ENCODE measurements at regions of chr9 and their contacts with region 1.

Region 1: GRCh38 chr9:2014696-2015580 is at the start of gene SMARCA2:
- DNase-seq: peak; percentile 96 to 98 (median 97)
- ATAC-seq: peak; percentile 90
- H3K4me3 ChIP-seq: peak within 1 kb of the TSS; percentile 98
- H3K4me3 Mint-ChIP-seq: peak within 1 kb of the TSS; percentile 93 to 100 (median 98)
- H3K27ac ChIP-seq: peak within 1 kb of the TSS; percentile 92
- H3K27ac Mint-ChIP-seq: peak within 1 kb of the TSS; percentile 97 to 100 (median 99)
- H3K4me1 ChIP-seq: peaks cover 16 to 18% of the 10 kb centered on the region in 2 donors
- H3K4me1 Mint-ChIP-seq: peaks cover 21 to 60% (median 32%) of the 10 kb centered on the region in 7 donors
- H3K27me3 ChIP-seq: no peaks in the 10 kb centered on the region
- H3K27me3 Mint-ChIP-seq: peaks cover 0 to 24% (median 0%) of the 10 kb centered on the region in 5 donors
- total RNA-seq, gene SMARCA2: 233 to 294 (median 258) TPM

Region 2: GRCh38 chr9:272251-273213 is 1742.4 kb before region 1 on chr9:
- CTCF ChIA-PET with region 1: no interaction called
- POLR2A ChIA-PET with region 1: no interaction called
- intact Hi-C with region 1: loop called in 1 of 2 experiments (anchors 5 kb)
- DNase-seq: peak; percentile 20 to 91 (median 85)
- ATAC-seq: peak; percentile 93
- H3K4me3 ChIP-seq: peak overlapping the region; percentile 56
- H3K4me3 Mint-ChIP-seq: peak overlapping the region in 9 of 10 donors; percentile 86 to 99 (median 92)
- H3K27ac ChIP-seq: peak overlapping the region; percentile 88
- H3K27ac Mint-ChIP-seq: peak overlapping the region in 7 of 9 donors; percentile 83 to 99 (median 94)
- H3K4me1 ChIP-seq: peaks cover 33 to 36% of the 10 kb centered on the region in 2 donors
- H3K4me1 Mint-ChIP-seq: peaks cover 30 to 66% (median 55%) of the 10 kb centered on the region in 7 donors
- H3K27me3 ChIP-seq: no peaks in the 10 kb centered on the region
- H3K27me3 Mint-ChIP-seq: no peaks in the 10 kb centered on the region

Region 3: GRCh38 chr9:1939926-1940368 is 75.0 kb before region 1 on chr9:
- CTCF ChIA-PET with region 1: no interaction called
- POLR2A ChIA-PET with region 1: interaction called, 3 read pairs
- intact Hi-C with region 1: loop called in 1 of 2 experiments (anchors 5 kb)
- DNase-seq: peak in 6 of 9 donors; percentile 19 to 44 (median 26)
- ATAC-seq: peak; percentile 70
- H3K4me3 ChIP-seq: no peak overlapping the region
- H3K4me3 Mint-ChIP-seq: no peak overlapping the region
- H3K27ac ChIP-seq: no peak overlapping the region
- H3K27ac Mint-ChIP-seq: no peak overlapping the region
- H3K4me1 ChIP-seq: no peaks in the 10 kb centered on the region
- H3K4me1 Mint-ChIP-seq: peaks cover 0 to 5% (median 0%) of the 10 kb centered on the region in 7 donors
- H3K27me3 ChIP-seq: no peaks in the 10 kb centered on the region
- H3K27me3 Mint-ChIP-seq: peaks cover 0 to 11% (median 6%) of the 10 kb centered on the region in 5 donors

Region 4: DNA sequence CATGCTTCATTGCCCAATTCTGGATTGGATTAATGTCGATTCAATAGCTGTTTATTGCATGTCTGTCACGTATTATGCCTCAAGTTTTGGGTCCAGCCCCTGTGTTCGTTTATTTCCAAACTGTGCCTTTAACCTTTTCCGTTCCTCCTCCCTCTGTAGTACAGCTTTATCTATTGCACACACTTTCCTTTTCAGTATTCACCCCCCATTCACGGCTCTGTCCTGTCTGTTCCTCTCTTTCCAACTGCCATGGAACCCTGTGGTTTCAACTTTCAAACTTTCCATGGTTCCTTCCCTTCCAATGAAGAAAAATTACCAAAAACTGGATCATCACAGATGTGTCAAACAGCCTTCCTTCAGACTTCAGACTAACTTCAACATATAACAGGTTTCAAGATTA is 17.3 kb after region 1 on chr9:
- CTCF ChIA-PET with region 1: interaction called, 3 read pairs
- POLR2A ChIA-PET with region 1: interaction called, 35 read pairs
- intact Hi-C with region 1: loop called in 1 of 2 experiments (anchors 2 kb)
- DNase-seq: no peak
- ATAC-seq: no peak
- H3K4me3 ChIP-seq: no peak overlapping the region
- H3K4me3 Mint-ChIP-seq: peak overlapping the region in 1 of 10 donors; percentile 56
- H3K27ac ChIP-seq: no peak overlapping the region
- H3K27ac Mint-ChIP-seq: peak overlapping the region in 8 of 9 donors; percentile 16 to 84 (median 56)
- H3K4me1 ChIP-seq: peaks cover 9 to 18% of the 10 kb centered on the region in 2 donors
- H3K4me1 Mint-ChIP-seq: peaks cover 42 to 77% (median 67%) of the 10 kb centered on the region in 7 donors
- H3K27me3 ChIP-seq: no peaks in the 10 kb centered on the region
- H3K27me3 Mint-ChIP-seq: no peaks in the 10 kb centered on the region

Region 5: DNA sequence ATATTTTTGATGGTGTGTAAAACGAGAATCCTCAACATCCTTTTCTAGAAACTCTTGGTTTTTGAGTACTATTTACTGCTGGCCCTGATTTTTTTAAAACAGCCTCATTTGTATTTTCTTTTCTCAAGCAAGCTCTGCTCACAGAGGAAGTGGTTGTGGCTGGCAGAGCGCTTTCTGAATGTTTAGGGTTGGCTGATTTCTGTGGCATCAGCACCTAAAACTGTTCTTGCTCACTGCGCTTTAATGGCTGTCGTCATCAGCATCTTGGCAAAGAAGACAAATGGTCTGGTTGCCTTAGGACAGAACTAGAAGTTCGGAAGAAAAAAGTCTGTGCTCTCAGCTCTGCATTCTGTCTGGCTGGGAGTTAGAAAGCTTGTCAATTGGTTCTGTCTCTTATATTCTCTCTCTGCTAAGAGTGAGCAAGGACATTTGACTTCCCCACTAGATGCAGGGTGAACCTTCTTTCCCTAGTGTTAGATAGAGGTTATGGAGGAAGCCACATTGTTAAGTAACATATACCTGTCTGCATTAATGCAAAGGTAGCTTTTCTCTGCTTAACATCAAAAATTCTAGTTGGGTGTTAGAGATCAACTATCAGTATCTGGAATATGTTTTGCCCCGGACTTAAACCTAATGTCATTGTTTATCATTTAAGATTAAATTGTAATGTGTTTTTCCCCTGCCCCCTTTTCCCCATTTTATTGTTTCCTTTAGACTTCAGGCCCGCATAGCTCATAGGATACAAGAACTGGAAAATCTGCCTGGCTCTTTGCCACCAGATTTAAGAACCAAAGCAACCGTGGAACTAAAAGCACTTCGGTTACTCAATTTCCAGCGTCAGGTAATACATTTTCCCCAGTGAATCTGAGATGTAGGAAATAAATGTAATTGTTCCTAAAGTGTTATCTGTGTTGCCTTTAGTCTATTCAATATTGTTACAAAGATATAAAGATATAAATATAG is 39.2 kb after region 1 on chr9:
- CTCF ChIA-PET with region 1: interaction called, 3 read pairs
- POLR2A ChIA-PET with region 1: interaction called, 98 read pairs
- intact Hi-C with region 1: loop called (anchors 1 kb)
- DNase-seq: peak; percentile 23 to 90 (median 83)
- ATAC-seq: peak; percentile 97
- H3K4me3 ChIP-seq: no peak overlapping the region
- H3K4me3 Mint-ChIP-seq: peak overlapping the region; percentile 2 to 79 (median 69)
- H3K27ac ChIP-seq: peak overlapping the region; percentile 60
- H3K27ac Mint-ChIP-seq: peak overlapping the region; percentile 87 to 97 (median 93)
- H3K4me1 ChIP-seq: peaks cover 26 to 29% of the 10 kb centered on the region in 2 donors
- H3K4me1 Mint-ChIP-seq: peaks cover 24 to 71% (median 64%) of the 10 kb centered on the region in 7 donors
- H3K27me3 ChIP-seq: no peaks in the 10 kb centered on the region
- H3K27me3 Mint-ChIP-seq: no peaks in the 10 kb centered on the region

Region 6: GRCh38 chr9:2158111-2158610 is 143.2 kb after region 1 on chr9:
- CTCF ChIA-PET with region 1: no interaction called
- POLR2A ChIA-PET with region 1: no interaction called
- intact Hi-C with region 1: loop called (anchors 2 to 5 kb)
- DNase-seq: peak in 8 of 9 donors; percentile 28 to 59 (median 53)
- ATAC-seq: peak; percentile 79
- H3K4me3 ChIP-seq: peak overlapping the region; percentile 46
- H3K4me3 Mint-ChIP-seq: peak overlapping the region; percentile 81 to 92 (median 85)
- H3K27ac ChIP-seq: peak overlapping the region; percentile 52
- H3K27ac Mint-ChIP-seq: peak overlapping the region; percentile 59 to 90 (median 81)
- H3K4me1 ChIP-seq: peaks cover 16 to 22% of the 10 kb centered on the region in 2 donors
- H3K4me1 Mint-ChIP-seq: peaks cover 36 to 86% (median 80%) of the 10 kb centered on the region in 7 donors
- H3K27me3 ChIP-seq: no peaks in the 10 kb centered on the region
- H3K27me3 Mint-ChIP-seq: no peaks in the 10 kb centered on the region

Region 7: GRCh38 chr9:2170712-2171111 is 155.8 kb after region 1 on chr9:
- CTCF ChIA-PET with region 1: no interaction called
- POLR2A ChIA-PET with region 1: no interaction called
- intact Hi-C with region 1: no loop called
- DNase-seq: no peak
- ATAC-seq: no peak
- H3K4me3 ChIP-seq: no peak overlapping the region
- H3K4me3 Mint-ChIP-seq: no peak overlapping the region
- H3K27ac ChIP-seq: no peak overlapping the region
- H3K27ac Mint-ChIP-seq: peak overlapping the region in 1 of 9 donors; percentile 24
- H3K4me1 ChIP-seq: no peaks in the 10 kb centered on the region
- H3K4me1 Mint-ChIP-seq: peaks cover 9 to 66% (median 37%) of the 10 kb centered on the region in 7 donors
- H3K27me3 ChIP-seq: no peaks in the 10 kb centered on the region
- H3K27me3 Mint-ChIP-seq: no peaks in the 10 kb centered on the region

Region 8: DNA sequence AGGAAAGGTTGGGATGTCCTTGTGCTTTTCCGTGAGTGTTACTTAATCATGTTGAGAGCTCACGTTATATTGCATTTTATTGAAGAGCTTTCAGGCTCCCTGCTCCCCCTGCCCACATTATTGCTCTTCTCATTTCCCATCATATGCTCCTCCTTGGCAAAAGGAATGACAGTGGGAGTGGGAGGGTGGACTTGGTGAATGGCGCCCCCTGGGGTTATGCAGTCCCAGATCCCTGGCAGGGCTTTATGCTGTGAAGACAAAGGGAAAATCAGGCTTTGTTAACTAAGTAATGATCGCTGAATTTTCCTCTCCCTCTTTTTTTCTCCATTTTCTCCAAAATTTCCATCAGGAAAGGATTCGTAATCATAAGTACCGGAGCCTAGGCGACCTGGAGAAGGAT is 166.9 kb after region 1 on chr9:
- CTCF ChIA-PET with region 1: no interaction called
- POLR2A ChIA-PET with region 1: no interaction called
- intact Hi-C with region 1: no loop called
- DNase-seq: no peak
- ATAC-seq: no peak
- H3K4me3 ChIP-seq: no peak overlapping the region
- H3K4me3 Mint-ChIP-seq: no peak overlapping the region
- H3K27ac ChIP-seq: no peak overlapping the region
- H3K27ac Mint-ChIP-seq: peak overlapping the region in 2 of 9 donors; percentile 14 to 22
- H3K4me1 ChIP-seq: no peaks in the 10 kb centered on the region
- H3K4me1 Mint-ChIP-seq: peaks cover 0 to 7% (median 4%) of the 10 kb centered on the region in 7 donors
- H3K27me3 ChIP-seq: no peaks in the 10 kb centered on the region
- H3K27me3 Mint-ChIP-seq: no peaks in the 10 kb centered on the region

Measured in naive thymus-derived CD4-positive, alpha-beta T cell (primary cell).